Activated B cell treated with CpG ODN at 0.5 μM for 24 hours (primary cell): ENCODE measurements at regions of chr6 and their contacts with region 1.

Region 1: GRCh38 chr6:28252009-28252975 is at the start of gene ZKSCAN4:
- DNase-seq: peak; percentile 57
- ATAC-seq: peak; percentile 90
- H3K4me3 Mint-ChIP-seq: peak within 1 kb of the TSS; percentile 95
- H3K27ac Mint-ChIP-seq: peak within 1 kb of the TSS; percentile 80
- H3K4me1 Mint-ChIP-seq: peaks cover 30% of the 10 kb centered on the region
- H3K27me3 Mint-ChIP-seq: peaks cover 2% of the 10 kb centered on the region
- CTCF ChIP-seq: no peak
- total RNA-seq, gene ZKSCAN4: 10.5 and 11.1 TPM in 2 replicates

Region 2: GRCh38 chr6:28124102-28124970 is 128.0 kb before region 1 on chr6 and contains the start of gene ZSCAN16:
- CTCF ChIA-PET with region 1: no interaction called
- POLR2A ChIA-PET with region 1: interaction called, 9 read pairs
- intact Hi-C with region 1: loop called (anchors 1 kb)
- DNase-seq: peak; percentile 72
- ATAC-seq: peak; percentile 96
- H3K4me3 Mint-ChIP-seq: peak within 1 kb of the TSS; percentile 97
- H3K27ac Mint-ChIP-seq: peak within 1 kb of the TSS; percentile 95
- H3K4me1 Mint-ChIP-seq: peaks cover 27% of the 10 kb centered on the region
- H3K27me3 Mint-ChIP-seq: no peaks in the 10 kb centered on the region
- CTCF ChIP-seq: no peak
- total RNA-seq, gene ZSCAN16: 10.6 and 12.6 TPM in 2 replicates

Region 3: DNA sequence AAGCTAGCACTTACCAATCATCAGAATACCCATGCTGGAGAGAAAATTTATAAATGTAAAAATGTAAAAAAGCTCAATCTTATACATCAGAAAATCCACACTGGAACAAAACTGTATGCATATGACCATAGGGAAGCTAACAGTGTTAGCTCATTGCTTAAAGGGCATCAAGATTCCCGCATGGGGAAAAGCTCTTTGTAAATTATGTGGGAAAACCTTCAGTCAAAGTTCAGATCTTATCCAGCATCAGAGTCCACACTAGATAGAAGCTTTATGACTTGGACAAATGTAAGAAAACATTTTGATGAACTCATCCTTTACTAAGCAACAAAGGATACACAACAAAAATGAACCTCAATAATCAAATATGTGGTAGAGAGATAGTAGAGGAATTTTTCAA is 75.9 kb before region 1 on chr6:
- CTCF ChIA-PET with region 1: no interaction called
- POLR2A ChIA-PET with region 1: no interaction called
- intact Hi-C with region 1: no loop called
- DNase-seq: no peak
- ATAC-seq: no peak
- H3K4me3 Mint-ChIP-seq: no peak overlapping the region
- H3K27ac Mint-ChIP-seq: no peak overlapping the region
- H3K4me1 Mint-ChIP-seq: no peaks in the 10 kb centered on the region
- H3K27me3 Mint-ChIP-seq: peaks cover 38% of the 10 kb centered on the region
- CTCF ChIP-seq: no peak

Region 4: GRCh38 chr6:28225056-28225834 is 27.0 kb before region 1 on chr6 and contains the start of gene ZSCAN9:
- CTCF ChIA-PET with region 1: no interaction called
- POLR2A ChIA-PET with region 1: interaction called, 5 read pairs
- intact Hi-C with region 1: loop called (anchors 1 kb)
- DNase-seq: peak; percentile 52
- ATAC-seq: peak; percentile 89
- H3K4me3 Mint-ChIP-seq: peak within 1 kb of the TSS; percentile 88
- H3K27ac Mint-ChIP-seq: peak within 1 kb of the TSS; percentile 68
- H3K4me1 Mint-ChIP-seq: peaks cover 21% of the 10 kb centered on the region
- H3K27me3 Mint-ChIP-seq: peaks cover 21% of the 10 kb centered on the region
- CTCF ChIP-seq: no peak
- total RNA-seq, gene ZSCAN9: 25.9 and 30.3 TPM in 2 replicates

Region 5: GRCh38 chr6:29071831-29072723 is 819.8 kb after region 1 on chr6:
- CTCF ChIA-PET with region 1: no interaction called
- POLR2A ChIA-PET with region 1: no interaction called
- intact Hi-C with region 1: no loop called
- DNase-seq: no peak
- ATAC-seq: peak; percentile 47
- H3K4me3 Mint-ChIP-seq: no peak overlapping the region
- H3K27ac Mint-ChIP-seq: no peak overlapping the region
- H3K4me1 Mint-ChIP-seq: no peaks in the 10 kb centered on the region
- H3K27me3 Mint-ChIP-seq: peaks cover 21% of the 10 kb centered on the region
- CTCF ChIP-seq: no peak